ENCODE measurements at regions of chr6 and their contacts with region 1.

Region 1: DNA sequence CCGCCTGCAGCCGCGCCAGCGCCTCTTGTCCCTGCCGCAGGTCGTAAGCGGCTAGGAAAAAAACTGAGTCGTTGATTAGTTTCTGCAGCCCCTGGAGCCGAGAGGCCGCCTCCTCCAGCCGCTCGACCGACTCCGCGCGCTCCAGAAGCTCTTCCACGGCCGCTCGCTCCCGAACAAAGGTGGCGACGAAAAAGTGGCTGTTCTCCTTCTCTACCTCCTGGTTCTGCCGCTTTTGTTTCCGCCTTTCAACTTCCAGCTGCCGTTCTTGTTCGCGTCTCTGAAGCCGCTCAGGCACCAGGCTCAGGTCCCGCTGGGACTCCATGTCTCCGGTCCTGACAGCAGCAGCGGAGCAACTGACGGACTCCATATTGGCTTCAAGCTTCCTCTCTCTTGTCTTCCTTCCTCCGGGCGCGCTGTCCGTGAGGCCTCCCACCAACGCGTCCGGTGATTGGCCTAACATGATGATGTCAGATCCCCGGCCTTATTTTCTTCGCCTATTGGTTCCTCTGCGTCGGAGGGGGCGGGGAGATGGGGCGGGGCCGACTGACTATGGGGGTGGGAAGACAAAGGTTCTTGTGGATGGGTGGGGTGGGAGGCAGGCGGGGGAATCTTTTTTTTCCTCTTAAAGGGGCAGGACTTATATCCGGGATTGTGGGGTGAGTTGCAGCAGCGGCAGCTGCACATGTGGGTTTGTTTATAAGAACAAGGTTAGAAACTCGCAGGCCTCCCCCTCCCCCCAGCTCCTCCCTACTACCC is at the start of gene TBCC:
- DNase-seq: peak; percentile 92 to 96 (median 94)
- H3K4me3 ChIP-seq: peak within 1 kb of the TSS; percentile 90
- H3K27ac ChIP-seq: peak within 1 kb of the TSS; percentile 84 to 85
- H3K4me1 ChIP-seq: peaks cover 6% of the 10 kb centered on the region
- H3K27me3 ChIP-seq: no peaks in the 10 kb centered on the region
- CTCF ChIP-seq: peak in 1 of 3 donors; percentile 16
- EP300 ChIP-seq: no peak
- POLR2A ChIP-seq: peak; percentile 86
- total RNA-seq, gene TBCC: 15.2 to 18.7 (median 16.7) TPM

Region 2: GRCh38 chr6:42710316-42710715 is 35.6 kb before region 1 on chr6:
- intact Hi-C with region 1: no loop called
- DNase-seq: no peak
- H3K4me3 ChIP-seq: no peak overlapping the region
- H3K27ac ChIP-seq: no peak overlapping the region
- H3K4me1 ChIP-seq: no peaks in the 10 kb centered on the region
- H3K27me3 ChIP-seq: no peaks in the 10 kb centered on the region
- CTCF ChIP-seq: no peak
- EP300 ChIP-seq: no peak
- POLR2A ChIP-seq: no peak

Region 3: DNA sequence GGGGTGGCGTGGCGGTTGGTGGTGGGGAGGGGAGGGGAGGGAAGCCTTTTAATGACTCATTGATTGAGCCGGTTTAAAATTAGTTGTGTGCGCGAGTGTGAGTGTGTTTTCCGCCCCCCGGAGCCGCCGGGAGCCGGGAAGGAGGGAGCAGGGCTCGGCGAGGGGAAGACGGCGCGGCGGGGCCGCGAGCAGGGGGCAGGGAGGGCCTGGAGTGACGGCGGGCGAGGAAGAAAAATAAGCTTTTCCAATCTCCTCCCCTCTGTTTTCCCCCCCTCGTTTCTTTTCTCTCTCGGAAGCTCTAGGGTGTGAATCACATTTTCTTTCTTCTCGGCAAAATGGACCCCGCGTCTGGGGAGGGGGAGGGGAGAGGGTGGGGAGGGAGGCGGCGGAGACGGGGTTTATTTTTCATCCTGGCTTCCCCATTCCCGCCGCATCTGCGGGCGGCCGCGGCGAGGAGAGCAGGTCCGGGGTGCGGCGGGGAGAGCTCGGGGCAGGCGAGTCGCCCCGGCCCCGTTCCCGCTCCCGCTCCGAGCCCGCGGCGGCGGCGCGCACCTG is 36.8 kb after region 1 on chr6:
- intact Hi-C with region 1: loop called in 2 of 4 experiments (anchors 1 to 5 kb)
- DNase-seq: peak; percentile 73 to 87 (median 81)
- H3K4me3 ChIP-seq: peak overlapping the region; percentile 67
- H3K27ac ChIP-seq: peak overlapping the region; percentile 99 to 100
- H3K4me1 ChIP-seq: peaks cover 10% of the 10 kb centered on the region
- H3K27me3 ChIP-seq: no peaks in the 10 kb centered on the region
- CTCF ChIP-seq: no peak
- EP300 ChIP-seq: no peak
- POLR2A ChIP-seq: peak; percentile 66